Psoas muscle (tissue), 8 donors: ENCODE measurements at regions of chr12 and their contacts with region 1.

Region 1: DNA sequence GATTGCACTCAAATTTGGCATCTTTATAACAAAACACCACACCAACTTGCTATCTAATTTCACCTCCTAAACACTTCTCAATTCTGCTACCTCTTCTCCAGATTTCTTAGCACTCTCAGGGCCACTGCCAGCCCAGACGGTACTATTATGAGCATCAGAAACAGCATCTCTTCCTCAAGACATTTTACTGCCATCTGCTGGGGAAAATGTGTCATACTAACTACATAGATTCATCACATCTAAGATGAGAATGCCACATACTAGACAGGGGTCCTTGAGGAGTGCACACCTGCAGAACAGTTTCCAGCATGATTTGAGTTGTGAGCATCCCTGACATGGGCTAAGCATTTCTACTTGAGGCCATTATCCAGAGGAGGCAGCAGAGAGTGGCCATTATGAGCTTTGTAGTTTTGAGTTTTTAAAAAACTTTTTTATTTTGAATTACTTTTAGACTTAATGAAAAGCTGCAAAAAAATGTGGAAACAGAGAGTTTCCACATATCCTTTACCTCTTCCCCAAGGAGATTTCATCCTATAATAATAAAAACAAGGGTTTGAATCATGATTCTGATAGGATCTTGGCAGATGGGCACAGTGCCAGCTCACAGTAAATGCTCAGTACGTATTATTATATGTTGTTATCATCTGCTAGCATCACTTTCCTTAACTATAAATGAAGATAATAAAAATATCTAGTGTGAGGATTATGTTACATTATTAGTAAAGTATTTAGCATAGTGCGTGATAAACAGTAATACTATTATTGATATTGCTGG is 15.2 kb upstream of the GRIP1 start:
- DNase-seq: no peak
- ATAC-seq: peak in 3 of 4 donors; percentile 43 to 78 (median 57)
- H3K4me3 ChIP-seq: no peak overlapping the region
- H3K27ac ChIP-seq: no peak overlapping the region
- H3K4me1 ChIP-seq: no peaks in the 10 kb centered on the region
- H3K27me3 ChIP-seq: no peaks in the 10 kb centered on the region
- CTCF ChIP-seq: peak; percentile 47

Region 2: GRCh38 chr12:66269757-66270383 is 424.2 kb before region 1 on chr12:
- intact Hi-C with region 1: loop called in 1 of 2 experiments (anchors 10 kb)
- DNase-seq: no peak
- ATAC-seq: no peak
- H3K4me3 ChIP-seq: no peak overlapping the region
- H3K27ac ChIP-seq: no peak overlapping the region
- H3K4me1 ChIP-seq: no peaks in the 10 kb centered on the region
- H3K27me3 ChIP-seq: no peaks in the 10 kb centered on the region
- CTCF ChIP-seq: peak; percentile 53

Region 3: DNA sequence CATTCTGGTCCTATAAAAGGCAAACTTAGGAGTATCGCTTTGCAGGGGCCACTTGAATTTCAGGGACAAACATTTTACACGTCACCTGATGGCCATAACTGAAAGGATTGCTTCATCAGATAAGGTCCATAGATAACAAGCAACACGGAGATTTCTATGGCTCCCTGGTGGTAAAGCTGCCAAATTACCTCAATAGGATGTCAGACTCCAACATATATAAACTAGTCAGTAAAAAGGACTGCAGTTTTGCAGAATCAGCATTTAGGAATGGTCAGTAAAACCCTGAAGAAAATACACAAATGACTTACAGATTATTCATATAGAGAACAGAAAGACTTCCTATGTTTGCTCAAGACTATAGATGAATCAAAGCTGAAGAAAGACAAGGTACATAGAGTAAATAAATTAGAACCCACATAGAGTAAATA is 50.9 kb after region 1 on chr12:
- intact Hi-C with region 1: no loop called
- DNase-seq: no peak
- ATAC-seq: no peak
- H3K4me3 ChIP-seq: no peak overlapping the region
- H3K27ac ChIP-seq: no peak overlapping the region
- H3K4me1 ChIP-seq: no peaks in the 10 kb centered on the region
- H3K27me3 ChIP-seq: no peaks in the 10 kb centered on the region
- CTCF ChIP-seq: no peak

Region 4: DNA sequence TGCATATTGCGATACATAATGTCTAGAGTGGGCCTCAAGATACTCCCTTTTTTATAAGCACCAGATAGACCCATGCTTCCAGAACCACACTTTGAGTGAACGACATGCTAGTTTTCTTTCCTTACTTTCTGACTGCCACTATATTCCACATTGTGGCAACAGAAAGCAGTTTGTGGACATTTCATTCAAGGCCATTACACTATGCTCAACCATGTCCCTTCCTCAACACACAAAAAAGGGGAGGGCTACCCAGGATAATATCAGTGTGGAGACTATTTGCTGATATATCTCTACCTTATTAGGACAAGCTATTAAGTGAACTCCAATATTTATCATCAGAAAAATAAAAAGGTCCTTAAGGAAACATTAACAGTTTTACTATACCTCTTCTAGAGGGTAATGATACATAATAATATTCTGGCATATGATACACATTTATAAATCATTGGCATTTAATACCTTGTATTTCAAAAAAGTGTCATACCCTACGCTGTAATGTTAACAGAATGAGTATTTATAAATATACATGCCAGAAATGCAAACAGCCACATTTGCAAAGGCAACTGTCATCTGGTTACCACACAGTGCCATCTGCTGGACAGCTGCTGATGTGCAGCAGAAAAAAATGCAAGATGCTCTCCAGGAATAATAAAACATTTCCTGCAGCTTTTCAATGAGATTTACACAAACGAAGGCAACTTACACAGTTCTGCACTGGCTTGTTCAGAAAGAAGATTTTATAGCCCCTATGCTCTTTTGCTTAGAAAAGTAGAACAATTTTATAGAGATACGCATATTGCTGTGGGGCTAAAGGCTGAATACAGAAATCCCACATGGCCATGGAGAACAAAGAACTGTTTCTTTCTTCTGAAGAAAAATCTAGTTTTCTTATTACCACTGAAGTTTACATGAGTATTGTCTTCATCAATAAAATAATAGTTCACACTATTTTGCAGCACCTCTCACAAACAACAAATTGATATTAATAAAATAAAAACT is 167.0 kb after region 1 on chr12:
- intact Hi-C with region 1: loop called (anchors 2 to 5 kb)
- DNase-seq: peak; percentile 35 to 52
- ATAC-seq: peak; percentile 46 to 63 (median 57)
- H3K4me3 ChIP-seq: no peak overlapping the region
- H3K27ac ChIP-seq: no peak overlapping the region
- H3K4me1 ChIP-seq: no peaks in the 10 kb centered on the region
- H3K27me3 ChIP-seq: peaks cover 0 to 6% (median 0%) of the 10 kb centered on the region in 3 donors
- CTCF ChIP-seq: peak; percentile 88

Region 5: GRCh38 chr12:67320614-67321295 is 626.7 kb after region 1 on chr12:
- intact Hi-C with region 1: no loop called
- DNase-seq: no peak
- ATAC-seq: peak in 1 of 4 donors; percentile 33
- H3K4me3 ChIP-seq: no peak overlapping the region
- H3K27ac ChIP-seq: no peak overlapping the region
- H3K4me1 ChIP-seq: peaks cover 7% of the 10 kb centered on the region
- H3K27me3 ChIP-seq: no peaks in the 10 kb centered on the region
- CTCF ChIP-seq: no peak